ENCODE measurements at regions of chr15 and their contacts with region 1.

Region 1: DNA sequence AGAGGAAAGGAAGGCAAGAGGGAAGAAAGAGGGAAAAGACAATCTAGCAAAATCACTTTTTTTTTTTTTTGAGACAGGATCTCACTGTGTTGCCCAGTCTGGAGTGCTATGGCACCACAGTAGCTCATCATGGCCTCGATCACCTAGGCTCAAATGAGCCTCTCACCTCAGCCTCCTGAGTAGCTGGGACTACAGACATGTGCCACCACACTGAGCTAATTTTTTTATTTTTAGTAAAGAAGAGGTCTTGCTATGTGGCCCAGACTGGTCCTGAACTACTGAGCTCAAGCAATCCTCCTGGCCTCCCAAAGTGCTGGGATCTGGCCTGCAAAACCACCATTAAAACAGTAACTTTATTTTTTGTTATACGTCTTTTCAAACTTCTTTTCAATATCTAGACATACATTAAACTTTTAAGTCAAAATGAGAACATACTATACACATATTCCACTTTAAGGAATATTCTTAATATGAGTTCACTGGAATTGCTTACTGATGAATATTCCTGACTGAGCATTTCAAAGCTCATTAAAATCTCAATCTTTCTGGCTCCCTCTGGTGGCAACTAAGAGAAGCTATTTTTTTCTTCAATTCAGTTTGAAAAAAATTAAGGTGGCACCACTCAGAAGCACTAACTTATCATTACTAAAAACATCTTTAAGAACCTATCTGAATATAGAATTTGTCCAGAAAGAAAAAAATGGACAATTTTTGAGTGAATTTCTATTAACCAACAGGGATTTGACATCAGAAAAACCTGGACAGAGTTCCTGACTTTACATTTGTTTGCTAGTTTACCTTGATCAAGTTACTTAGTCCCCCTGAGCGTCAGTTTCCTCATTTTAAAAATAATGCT is 40.9 kb downstream of the UACA start:
- DNase-seq: no peak

Region 2: DNA sequence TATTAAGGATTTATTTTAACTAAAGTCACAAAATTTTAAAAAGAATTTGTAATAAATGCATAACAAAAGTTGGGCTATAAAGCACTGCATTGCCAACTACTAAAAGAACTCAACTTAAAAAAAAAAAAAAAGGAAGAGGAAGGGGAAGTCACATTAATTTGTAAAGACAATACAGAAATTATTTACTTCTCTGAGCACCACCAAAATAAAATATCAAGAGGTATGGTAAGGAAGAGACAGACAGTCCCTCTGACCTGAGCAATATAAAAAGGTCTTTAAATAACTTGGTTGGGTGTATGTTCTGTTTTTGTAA is 42.6 kb before region 1 on chr15:
- CTCF ChIA-PET with region 1: interaction called, 23 read pairs
- POLR2A ChIA-PET with region 1: no interaction called
- DNase-seq: no peak

Region 3: GRCh38 chr15:70701891-70702568 is 20.5 kb before region 1 on chr15:
- CTCF ChIA-PET with region 1: interaction called, 17 read pairs
- POLR2A ChIA-PET with region 1: interaction called, 3 read pairs
- DNase-seq: peak; percentile 57

Region 4: DNA sequence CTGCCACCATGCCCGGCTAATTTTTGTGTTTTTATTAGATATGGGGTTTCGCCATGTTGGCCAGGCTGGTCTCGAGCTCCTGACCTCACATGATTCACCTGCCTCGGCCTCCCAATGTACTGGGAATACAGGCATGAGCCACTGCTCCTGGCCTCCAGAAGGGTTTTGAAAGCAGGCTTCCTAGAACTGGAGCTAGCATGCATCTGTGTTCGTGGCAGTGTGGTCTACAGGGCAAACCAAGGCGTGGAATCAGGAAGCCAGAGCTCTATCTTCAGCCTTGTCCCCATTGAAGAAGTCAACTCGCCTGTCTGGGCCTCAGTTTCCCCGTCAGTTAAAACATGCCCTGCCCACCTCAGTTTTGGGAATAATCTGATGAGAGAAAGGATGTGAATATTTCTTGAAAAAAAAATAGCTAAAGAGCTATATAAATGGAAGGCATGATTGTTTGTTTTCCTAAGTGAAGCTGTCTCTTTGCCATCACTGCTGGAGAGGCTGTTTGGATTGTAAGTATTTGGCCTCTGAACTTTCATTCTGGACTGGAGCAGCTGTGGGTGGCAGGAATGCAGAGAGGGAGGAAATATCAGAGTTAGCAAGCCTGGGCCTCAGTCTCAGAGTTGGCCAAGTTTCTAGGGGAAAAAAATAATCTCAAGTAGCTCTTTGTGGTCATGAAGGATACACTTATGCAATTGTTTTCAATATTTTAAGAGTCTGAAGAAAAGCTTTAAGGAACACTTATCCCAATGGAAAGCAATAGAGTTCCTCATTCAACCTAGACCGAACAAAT is 77.4 kb after region 1 on chr15:
- CTCF ChIA-PET with region 1: no interaction called
- POLR2A ChIA-PET with region 1: no interaction called
- DNase-seq: no peak

Region 5: DNA sequence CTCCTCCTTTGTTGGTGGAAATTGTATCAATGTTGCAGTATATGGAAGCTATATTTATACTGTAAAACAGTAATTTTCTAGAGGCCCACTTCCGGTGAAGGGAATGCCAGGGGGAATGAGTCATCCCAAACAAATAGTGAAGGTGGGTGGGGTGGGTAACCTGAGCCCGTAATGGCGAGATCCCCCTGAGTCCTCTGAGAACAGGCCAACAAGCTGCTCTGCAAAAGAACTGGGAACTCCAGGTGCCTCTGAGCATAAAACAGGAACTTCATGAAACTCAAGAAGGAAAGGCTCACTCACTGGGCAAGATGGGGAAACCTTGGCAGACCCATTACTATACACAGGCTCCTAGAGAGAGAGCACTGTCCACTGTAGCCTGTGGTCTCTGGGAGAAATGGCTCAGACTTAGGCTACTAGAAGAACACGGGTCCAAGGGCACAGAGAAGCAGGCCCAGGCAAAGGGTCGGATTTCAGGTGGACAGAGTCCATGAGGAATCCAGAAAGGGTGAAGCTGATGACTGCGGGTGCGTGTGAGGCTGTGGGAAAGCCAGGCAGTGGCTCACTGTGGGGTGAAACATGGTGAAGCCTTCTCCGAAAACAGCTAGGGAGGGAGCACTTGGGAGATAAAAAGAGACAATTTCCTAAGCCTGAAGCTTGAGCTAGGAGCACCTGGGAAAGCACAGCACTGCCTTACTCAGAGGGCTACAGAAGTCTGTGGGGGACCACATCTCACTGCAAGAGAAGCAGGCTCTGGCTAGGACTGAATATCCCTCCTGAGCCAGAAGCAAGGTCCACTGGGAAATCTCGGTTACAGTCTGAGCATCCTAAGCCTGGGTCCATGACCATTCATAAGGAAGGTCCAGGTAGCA is 111.6 kb after region 1 on chr15:
- CTCF ChIA-PET with region 1: no interaction called
- POLR2A ChIA-PET with region 1: no interaction called
- DNase-seq: peak; percentile 55

Region 6: GRCh38 chr15:70875001-70875782 is 152.7 kb after region 1 on chr15:
- CTCF ChIA-PET with region 1: interaction called, 10 read pairs
- POLR2A ChIA-PET with region 1: no interaction called
- DNase-seq: no peak

Measured in HEK293T (cell line).